ENCODE measurements at regions of chr2 and their contacts with region 1.

Region 1: DNA sequence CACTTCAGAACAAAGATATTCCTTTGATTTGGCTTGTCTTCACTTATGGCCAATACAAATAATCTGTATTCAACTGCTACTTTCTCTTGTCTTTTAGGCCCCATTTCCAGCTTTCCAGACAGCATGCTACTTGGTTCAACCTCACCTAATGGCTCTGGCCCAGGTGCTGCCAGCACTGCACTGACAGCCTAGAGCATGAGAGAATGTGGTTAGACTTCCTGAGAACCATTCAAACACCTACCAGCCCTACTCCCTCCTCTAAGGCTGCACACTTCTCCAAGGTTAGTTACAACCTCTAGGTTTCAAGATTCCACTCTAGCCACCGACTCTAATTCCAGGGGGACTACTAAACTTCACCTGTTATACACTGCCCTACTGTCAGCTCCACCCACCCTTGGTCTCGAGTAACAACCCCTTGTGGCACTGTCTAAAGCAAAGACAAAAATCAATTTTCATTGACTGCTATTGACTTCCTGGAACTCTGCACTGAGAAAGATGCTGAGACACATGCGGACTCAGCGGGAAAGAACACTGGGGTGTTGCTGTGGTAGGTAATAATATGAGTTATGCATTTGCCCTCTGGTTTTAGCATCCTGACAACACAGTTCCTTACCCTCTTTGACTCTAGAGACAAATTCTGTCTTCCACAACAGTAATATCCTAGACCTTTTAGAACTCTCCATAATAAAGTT is 38.2 kb downstream of the PLEKHM3 start:
- DNase-seq: no peak
- ATAC-seq: no peak
- H3K4me3 ChIP-seq: no peak overlapping the region
- H3K4me3 Mint-ChIP-seq: no peak overlapping the region
- H3K27ac ChIP-seq: no peak overlapping the region
- H3K27ac Mint-ChIP-seq: no peak overlapping the region
- H3K4me1 ChIP-seq: peaks cover 34 to 44% of the 10 kb centered on the region in 2 donors
- H3K4me1 Mint-ChIP-seq: peaks cover 32% of the 10 kb centered on the region
- H3K27me3 ChIP-seq: no peaks in the 10 kb centered on the region
- H3K27me3 Mint-ChIP-seq: no peaks in the 10 kb centered on the region
- CTCF ChIP-seq: no peak

Region 2: GRCh38 chr2:207926133-207926988 is 60.8 kb before region 1 on chr2:
- CTCF ChIA-PET with region 1: no interaction called
- POLR2A ChIA-PET with region 1: no interaction called
- intact Hi-C with region 1: no loop called
- DNase-seq: no peak
- ATAC-seq: no peak
- H3K4me3 ChIP-seq: no peak overlapping the region
- H3K4me3 Mint-ChIP-seq: no peak overlapping the region
- H3K27ac ChIP-seq: no peak overlapping the region
- H3K27ac Mint-ChIP-seq: no peak overlapping the region
- H3K4me1 ChIP-seq: no peaks in the 10 kb centered on the region
- H3K4me1 Mint-ChIP-seq: no peaks in the 10 kb centered on the region
- H3K27me3 ChIP-seq: no peaks in the 10 kb centered on the region
- H3K27me3 Mint-ChIP-seq: no peaks in the 10 kb centered on the region
- CTCF ChIP-seq: no peak

Region 3: GRCh38 chr2:207974216-207974605 is 13.0 kb before region 1 on chr2:
- CTCF ChIA-PET with region 1: interaction called, 19 read pairs
- POLR2A ChIA-PET with region 1: interaction called, 5 read pairs
- intact Hi-C with region 1: no loop called
- DNase-seq: no peak
- ATAC-seq: no peak
- H3K4me3 ChIP-seq: no peak overlapping the region
- H3K4me3 Mint-ChIP-seq: no peak overlapping the region
- H3K27ac ChIP-seq: no peak overlapping the region
- H3K27ac Mint-ChIP-seq: no peak overlapping the region
- H3K4me1 ChIP-seq: peaks cover 14 to 15% of the 10 kb centered on the region in 2 donors
- H3K4me1 Mint-ChIP-seq: peaks cover 15% of the 10 kb centered on the region
- H3K27me3 ChIP-seq: no peaks in the 10 kb centered on the region
- H3K27me3 Mint-ChIP-seq: no peaks in the 10 kb centered on the region
- CTCF ChIP-seq: no peak

Region 4: DNA sequence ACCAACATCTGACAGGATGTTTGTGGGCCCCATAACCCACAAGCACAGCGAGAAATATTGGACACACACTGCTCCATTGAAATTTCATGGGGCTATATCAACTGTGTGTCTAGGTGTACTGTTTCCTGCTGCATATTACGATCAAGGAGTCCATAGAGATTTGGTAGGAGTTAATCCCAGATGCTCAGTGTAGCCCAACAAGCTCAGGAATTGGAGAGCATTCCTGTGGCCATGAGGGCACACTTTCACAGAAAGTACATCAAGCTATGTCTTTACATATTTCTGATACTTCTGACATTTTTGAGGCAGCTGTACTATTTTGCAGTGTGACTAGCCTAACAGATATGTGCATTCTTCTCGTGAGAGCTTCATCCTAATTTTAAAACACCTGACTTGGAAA is 892.5 kb after region 1 on chr2:
- CTCF ChIA-PET with region 1: no interaction called
- POLR2A ChIA-PET with region 1: no interaction called
- intact Hi-C with region 1: no loop called
- DNase-seq: no peak
- ATAC-seq: no peak
- H3K4me3 ChIP-seq: no peak overlapping the region
- H3K4me3 Mint-ChIP-seq: no peak overlapping the region
- H3K27ac ChIP-seq: no peak overlapping the region
- H3K27ac Mint-ChIP-seq: no peak overlapping the region
- H3K4me1 ChIP-seq: no peaks in the 10 kb centered on the region
- H3K4me1 Mint-ChIP-seq: no peaks in the 10 kb centered on the region
- H3K27me3 ChIP-seq: no peaks in the 10 kb centered on the region
- H3K27me3 Mint-ChIP-seq: no peaks in the 10 kb centered on the region
- CTCF ChIP-seq: no peak

Measured in B cell (primary cell).